ENCODE measurements at regions of chr6 and their contacts with region 1.

Region 1: DNA sequence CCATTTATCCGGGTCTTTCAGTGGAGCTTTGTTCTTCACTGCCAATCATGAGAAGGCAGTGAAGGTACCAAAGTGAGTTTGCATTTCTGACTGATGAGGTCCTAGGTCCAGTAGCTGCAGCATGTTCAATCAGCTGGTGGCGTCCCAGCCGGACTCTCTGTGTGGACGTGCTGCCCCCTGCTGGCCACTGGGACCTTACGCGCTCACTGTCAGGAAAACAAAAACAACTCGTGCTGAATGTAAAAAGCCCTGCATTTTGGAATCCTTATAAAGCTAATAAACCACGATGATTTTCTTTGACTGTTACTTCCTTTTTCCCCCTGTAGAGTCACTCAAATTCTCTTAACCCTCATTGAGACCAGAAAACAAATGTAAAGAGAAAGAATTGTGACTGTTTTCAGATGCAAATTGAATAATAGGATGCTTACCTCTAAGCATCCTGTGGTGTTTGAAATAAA is 4.9 kb upstream of the CD24 start:
- DNase-seq: peak; percentile 21 to 85
- H3K4me3 ChIP-seq: no peak overlapping the region
- H3K27ac ChIP-seq: no peak overlapping the region
- H3K4me1 ChIP-seq: peaks cover 4 to 7% of the 10 kb centered on the region in 2 donors
- H3K27me3 ChIP-seq: peaks cover 5% of the 10 kb centered on the region
- CTCF ChIP-seq: peak; percentile 56 to 87 (median 83)

Region 2: DNA sequence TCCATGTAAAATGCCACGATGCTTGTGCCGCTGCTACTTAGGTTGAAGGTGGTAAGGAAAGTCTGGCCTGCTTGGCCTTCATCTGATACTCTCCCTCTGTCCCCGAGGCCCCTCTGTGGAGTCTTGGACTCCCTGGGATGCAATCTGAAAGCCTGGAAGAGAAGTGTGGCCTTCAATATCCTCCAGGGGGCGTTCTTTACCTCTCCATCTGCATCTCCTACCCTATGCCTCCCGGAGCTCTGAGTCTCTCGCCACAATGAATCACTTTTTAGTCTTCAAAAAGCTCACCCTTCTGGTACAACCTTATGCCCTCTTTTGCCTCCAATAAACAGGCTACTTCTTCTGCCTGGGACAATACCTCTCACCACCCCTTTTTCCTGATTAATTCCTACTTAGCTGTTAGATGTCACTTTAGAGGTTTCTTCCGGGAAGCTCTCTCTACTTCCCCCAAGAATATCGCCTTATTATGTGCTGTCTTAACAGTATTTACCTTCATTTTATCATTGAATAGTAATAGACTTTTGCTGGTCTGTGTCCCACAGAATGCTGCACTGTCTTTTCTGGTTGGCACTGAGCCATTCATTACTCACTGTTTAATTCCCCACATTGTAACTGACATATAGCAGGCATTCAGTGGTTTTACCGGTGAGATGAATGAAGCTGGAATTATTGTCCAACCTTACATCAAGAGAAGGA is 640.0 kb before region 1 on chr6:
- intact Hi-C with region 1: loop called (anchors 5 kb)
- DNase-seq: peak in 1 of 2 donors; percentile 68
- H3K4me3 ChIP-seq: no peak overlapping the region
- H3K27ac ChIP-seq: no peak overlapping the region
- H3K4me1 ChIP-seq: no peaks in the 10 kb centered on the region
- H3K27me3 ChIP-seq: no peaks in the 10 kb centered on the region
- CTCF ChIP-seq: peak; percentile 32 to 65 (median 53)

Region 3: DNA sequence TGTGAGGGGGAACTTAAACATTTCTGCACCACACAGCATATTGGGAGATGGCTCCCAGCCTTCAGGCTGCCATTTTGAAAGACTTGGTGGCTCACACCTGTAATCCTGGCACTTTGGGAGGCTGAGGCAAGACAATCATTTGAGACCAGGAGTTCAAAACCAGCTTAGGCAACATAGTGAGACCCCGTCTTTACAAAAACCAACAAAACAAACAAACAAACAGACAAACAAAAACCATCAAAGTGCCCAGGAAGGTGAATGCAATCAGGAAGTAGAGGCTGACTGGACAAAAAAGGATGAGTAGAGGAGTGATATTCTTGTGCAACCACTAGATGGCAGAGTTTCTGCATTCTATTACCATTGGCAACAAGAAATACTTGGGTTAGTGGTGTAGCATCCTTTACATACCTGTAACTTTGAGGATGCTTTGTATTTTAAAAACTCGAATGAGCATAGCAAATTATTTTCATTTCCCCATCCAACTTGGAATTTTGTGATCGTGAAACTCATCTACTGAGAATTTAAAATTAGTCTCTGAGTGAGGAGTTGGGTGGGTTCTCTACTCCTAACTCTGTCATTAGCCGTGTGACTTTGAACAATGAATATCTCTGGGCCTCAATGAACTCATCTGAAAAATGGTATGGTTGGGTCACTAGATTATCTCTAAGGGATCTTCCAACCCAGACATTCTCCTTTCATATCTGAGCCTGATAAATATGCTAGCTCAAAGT is 534.5 kb before region 1 on chr6:
- intact Hi-C with region 1: loop called (anchors 10 kb)
- DNase-seq: no peak
- H3K4me3 ChIP-seq: no peak overlapping the region
- H3K27ac ChIP-seq: no peak overlapping the region
- H3K4me1 ChIP-seq: no peaks in the 10 kb centered on the region
- H3K27me3 ChIP-seq: no peaks in the 10 kb centered on the region
- CTCF ChIP-seq: peak; percentile 37 to 73 (median 65)

Region 4: GRCh38 chr6:106608062-106608668 is 371.3 kb before region 1 on chr6:
- intact Hi-C with region 1: loop called (anchors 2 kb)
- DNase-seq: no peak
- H3K4me3 ChIP-seq: no peak overlapping the region
- H3K27ac ChIP-seq: no peak overlapping the region
- H3K4me1 ChIP-seq: no peaks in the 10 kb centered on the region
- H3K27me3 ChIP-seq: no peaks in the 10 kb centered on the region
- CTCF ChIP-seq: peak in 2 of 3 experiments; percentile 33 to 57

Region 5: GRCh38 chr6:106927531-106928398 is 51.7 kb before region 1 on chr6:
- intact Hi-C with region 1: no loop called
- DNase-seq: no peak
- H3K4me3 ChIP-seq: no peak overlapping the region
- H3K27ac ChIP-seq: no peak overlapping the region
- H3K4me1 ChIP-seq: no peaks in the 10 kb centered on the region
- H3K27me3 ChIP-seq: no peaks in the 10 kb centered on the region
- CTCF ChIP-seq: no peak

Region 6: DNA sequence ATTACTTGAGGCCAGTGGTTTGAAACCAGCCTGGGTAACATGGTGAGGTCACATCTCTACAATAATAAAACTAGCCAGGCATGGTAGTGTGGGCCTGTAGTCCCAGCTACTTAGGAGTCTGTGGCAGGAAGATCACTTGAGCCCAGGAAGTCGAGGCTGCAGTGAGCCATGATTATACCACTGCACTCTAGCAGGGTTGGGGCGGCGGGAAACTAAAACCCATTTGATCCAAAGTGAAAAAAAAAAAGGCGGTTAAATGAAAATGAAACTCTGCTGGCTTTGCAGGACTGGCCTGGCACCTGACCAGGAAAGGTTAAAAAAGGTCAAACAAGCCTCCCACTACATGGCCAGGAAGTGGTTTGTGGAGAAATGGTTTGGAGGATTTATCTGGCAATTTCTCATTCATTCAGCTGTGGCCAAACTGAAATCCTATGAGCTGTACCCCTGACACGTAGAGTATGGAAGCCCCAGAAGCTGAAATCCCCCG is 85.2 kb after region 1 on chr6:
- intact Hi-C with region 1: no loop called
- DNase-seq: no peak
- H3K4me3 ChIP-seq: no peak overlapping the region
- H3K27ac ChIP-seq: no peak overlapping the region
- H3K4me1 ChIP-seq: no peaks in the 10 kb centered on the region
- H3K27me3 ChIP-seq: no peaks in the 10 kb centered on the region
- CTCF ChIP-seq: no peak